Panc1 (cell line): ENCODE measurements at regions of chr4 and their contacts with region 1.

Region 1: DNA sequence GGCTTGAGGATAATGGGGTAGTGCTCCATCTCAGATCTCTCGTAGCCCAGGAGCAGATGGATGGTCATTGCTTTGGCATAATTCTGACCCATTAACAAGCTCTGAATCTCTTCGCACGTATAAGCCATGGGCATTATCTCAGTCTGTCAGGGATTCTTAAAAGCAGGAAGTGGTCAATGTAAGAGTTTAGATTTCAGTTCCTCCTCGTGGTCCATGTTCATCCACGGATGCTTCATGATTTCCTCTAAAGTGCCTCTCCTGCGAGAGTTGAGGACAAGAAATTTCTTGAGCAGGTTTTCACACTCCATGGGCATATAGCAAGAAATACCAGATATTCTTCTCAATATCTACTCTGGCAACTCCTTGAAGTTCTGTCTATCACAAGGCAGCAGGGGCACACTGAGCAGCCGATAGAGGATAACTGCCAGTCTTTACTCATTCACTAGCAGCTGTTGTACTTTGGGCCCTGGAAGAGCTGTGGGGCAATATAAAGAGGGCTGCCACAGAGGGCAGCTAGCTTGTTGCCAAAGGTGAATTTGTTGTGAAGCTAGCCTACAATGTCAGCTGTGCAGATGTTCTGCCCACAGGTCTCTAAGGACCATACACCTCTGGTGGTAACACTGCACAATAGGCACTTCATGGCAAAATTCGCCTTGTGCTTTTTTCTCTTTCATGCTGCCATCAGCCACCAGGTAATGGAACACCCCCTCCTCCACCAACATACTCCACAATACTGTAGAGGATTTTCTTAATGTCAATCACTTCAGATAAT is 52.0 kb upstream of the WDR17 start:
- DNase-seq: no peak
- ATAC-seq: no peak
- H3K4me3 ChIP-seq: no peak overlapping the region
- H3K27ac ChIP-seq: no peak overlapping the region
- H3K4me1 ChIP-seq: no peaks in the 10 kb centered on the region
- H3K27me3 ChIP-seq: no peaks in the 10 kb centered on the region
- CTCF ChIP-seq: no peak

Region 2: GRCh38 chr4:175246941-175247340 is 766.7 kb before region 1 on chr4:
- CTCF ChIA-PET with region 1: no interaction called
- POLR2A ChIA-PET with region 1: no interaction called
- in situ Hi-C with region 1: no loop called
- intact Hi-C with region 1: no loop called
- DNase-seq: no peak
- ATAC-seq: no peak
- H3K4me3 ChIP-seq: no peak overlapping the region
- H3K27ac ChIP-seq: no peak overlapping the region
- H3K4me1 ChIP-seq: no peaks in the 10 kb centered on the region
- H3K27me3 ChIP-seq: no peaks in the 10 kb centered on the region
- CTCF ChIP-seq: no peak

Region 3: GRCh38 chr4:176044589-176044951 is 30.9 kb after region 1 on chr4:
- CTCF ChIA-PET with region 1: interaction called, 10 read pairs
- POLR2A ChIA-PET with region 1: no interaction called
- in situ Hi-C with region 1: no loop called
- intact Hi-C with region 1: no loop called
- DNase-seq: no peak
- ATAC-seq: no peak
- H3K4me3 ChIP-seq: no peak overlapping the region
- H3K27ac ChIP-seq: no peak overlapping the region
- H3K4me1 ChIP-seq: no peaks in the 10 kb centered on the region
- H3K27me3 ChIP-seq: no peaks in the 10 kb centered on the region
- CTCF ChIP-seq: no peak